ENCODE measurements at regions of chr15 and their contacts with region 1.

Region 1: DNA sequence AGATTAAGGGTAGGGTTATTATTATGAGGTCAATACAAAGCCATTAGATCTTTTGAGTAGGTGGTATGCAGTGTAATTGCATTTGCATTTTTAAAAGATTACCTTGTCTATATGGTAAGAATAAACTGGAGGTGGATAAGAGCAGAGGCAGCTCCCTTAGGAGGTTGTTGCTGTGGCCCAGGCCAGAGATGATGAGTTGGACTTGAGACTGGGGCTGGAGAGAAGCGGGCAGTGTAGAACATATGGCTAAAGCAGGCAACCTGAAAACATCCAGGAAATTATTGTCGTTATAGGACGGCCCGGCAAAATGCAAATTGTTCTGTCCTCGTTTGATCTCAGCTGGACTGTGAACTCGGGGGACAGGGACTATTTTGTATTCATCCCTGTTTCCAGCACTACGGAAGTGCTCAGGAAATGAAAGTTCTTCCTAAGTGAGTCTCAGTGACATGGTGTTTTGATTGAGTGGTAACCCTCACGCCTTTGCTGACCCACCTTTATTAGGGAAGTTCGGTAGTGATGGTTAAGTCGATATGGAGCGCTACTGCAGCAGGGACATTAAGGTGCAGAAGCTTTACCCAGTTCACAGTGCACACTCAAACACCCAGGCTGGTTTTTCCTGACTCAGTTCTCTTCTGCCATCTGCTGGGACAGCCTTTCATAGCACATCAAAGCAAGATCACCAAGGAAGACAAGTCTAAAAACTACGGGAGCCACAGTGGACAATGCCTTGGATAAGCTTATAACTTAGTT is 27.2 kb upstream of the VPS33B start:
- DNase-seq: peak; percentile 68
- ATAC-seq: peak; percentile 99
- H3K4me3 ChIP-seq: peak overlapping the region in 1 of 2 experiments; percentile 23; a peak in 1 of 4 replicates
- H3K27ac ChIP-seq: no peak overlapping the region
- H3K4me1 ChIP-seq: no peaks in the 10 kb centered on the region
- H3K27me3 ChIP-seq: peaks cover 10% of the 10 kb centered on the region
- CTCF ChIP-seq: peak; percentile 89

Region 2: GRCh38 chr15:90598031-90598577 is 451.4 kb before region 1 on chr15:
- CTCF ChIA-PET with region 1: no interaction called
- POLR2A ChIA-PET with region 1: no interaction called
- in situ Hi-C with region 1: no loop called
- intact Hi-C with region 1: no loop called
- DNase-seq: no peak
- ATAC-seq: peak; percentile 34; the same call in 1 of the 2 replicates
- H3K4me3 ChIP-seq: no peak overlapping the region
- H3K27ac ChIP-seq: no peak overlapping the region
- H3K4me1 ChIP-seq: no peaks in the 10 kb centered on the region
- H3K27me3 ChIP-seq: no peaks in the 10 kb centered on the region
- CTCF ChIP-seq: no peak

Region 3: GRCh38 chr15:90638201-90638691 is 411.3 kb before region 1 on chr15:
- CTCF ChIA-PET with region 1: no interaction called
- POLR2A ChIA-PET with region 1: no interaction called
- in situ Hi-C with region 1: no loop called
- intact Hi-C with region 1: no loop called
- DNase-seq: no peak
- ATAC-seq: no peak
- H3K4me3 ChIP-seq: no peak overlapping the region
- H3K27ac ChIP-seq: no peak overlapping the region
- H3K4me1 ChIP-seq: no peaks in the 10 kb centered on the region
- H3K27me3 ChIP-seq: no peaks in the 10 kb centered on the region
- CTCF ChIP-seq: no peak

Region 4: GRCh38 chr15:90982135-90982534 is 67.4 kb before region 1 on chr15:
- CTCF ChIA-PET with region 1: interaction called, 13 read pairs
- POLR2A ChIA-PET with region 1: no interaction called
- in situ Hi-C with region 1: no loop called
- intact Hi-C with region 1: no loop called
- DNase-seq: no peak
- ATAC-seq: no peak
- H3K4me3 ChIP-seq: no peak overlapping the region
- H3K27ac ChIP-seq: no peak overlapping the region
- H3K4me1 ChIP-seq: peaks cover 8% of the 10 kb centered on the region
- H3K27me3 ChIP-seq: no peaks in the 10 kb centered on the region
- CTCF ChIP-seq: no peak

Region 5: GRCh38 chr15:91224755-91225380 is 175.3 kb after region 1 on chr15:
- CTCF ChIA-PET with region 1: no interaction called
- POLR2A ChIA-PET with region 1: no interaction called
- in situ Hi-C with region 1: no loop called
- intact Hi-C with region 1: no loop called
- DNase-seq: peak; percentile 57
- ATAC-seq: peak; percentile 89
- H3K4me3 ChIP-seq: no peak overlapping the region
- H3K27ac ChIP-seq: no peak overlapping the region
- H3K4me1 ChIP-seq: no peaks in the 10 kb centered on the region
- H3K27me3 ChIP-seq: peaks cover 11% of the 10 kb centered on the region
- CTCF ChIP-seq: peak; percentile 87

Region 6: GRCh38 chr15:91589356-91589755 is 539.8 kb after region 1 on chr15:
- CTCF ChIA-PET with region 1: no interaction called
- POLR2A ChIA-PET with region 1: no interaction called
- in situ Hi-C with region 1: no loop called
- intact Hi-C with region 1: no loop called
- DNase-seq: no peak
- ATAC-seq: no peak
- H3K4me3 ChIP-seq: no peak overlapping the region
- H3K27ac ChIP-seq: no peak overlapping the region
- H3K4me1 ChIP-seq: no peaks in the 10 kb centered on the region
- H3K27me3 ChIP-seq: no peaks in the 10 kb centered on the region
- CTCF ChIP-seq: no peak